SK-N-SH (cell line): ENCODE measurements at regions of chr9 and their contacts with region 1.

Region 1: GRCh38 chr9:109817846-109818472 is 38.0 kb downstream of the PALM2AKAP2 start:
- DNase-seq: peak; percentile 45
- H3K4me3 ChIP-seq: no peak overlapping the region; a peak in 1 of 4 replicates
- H3K27ac ChIP-seq: peak overlapping the region; percentile 60 to 100; a peak in 3 of 4 replicates
- H3K4me1 ChIP-seq: peaks cover 10 to 27% of the 10 kb centered on the region in 2 experiments
- H3K27me3 ChIP-seq: no peaks in the 10 kb centered on the region
- CTCF ChIP-seq: peak; percentile 85
- EP300 ChIP-seq: peak in 1 of 2 experiments; percentile 71; a peak in 1 of 4 replicates
- RAD21 ChIP-seq: peak; percentile 74

Region 2: GRCh38 chr9:109455861-109456260 is 362.1 kb before region 1 on chr9:
- CTCF ChIA-PET with region 1: no interaction called
- POLR2A ChIA-PET with region 1: no interaction called
- DNase-seq: no peak
- H3K4me3 ChIP-seq: no peak overlapping the region
- H3K27ac ChIP-seq: no peak overlapping the region
- H3K4me1 ChIP-seq: peaks cover 3 to 16% of the 10 kb centered on the region in 2 experiments; a peak in 2 of 4 replicates
- H3K27me3 ChIP-seq: no peaks in the 10 kb centered on the region
- CTCF ChIP-seq: no peak
- EP300 ChIP-seq: no peak
- RAD21 ChIP-seq: no peak

Region 3: GRCh38 chr9:109574068-109574882 is 243.7 kb before region 1 on chr9:
- CTCF ChIA-PET with region 1: interaction called, 21 read pairs
- POLR2A ChIA-PET with region 1: no interaction called
- DNase-seq: peak; percentile 42
- H3K4me3 ChIP-seq: no peak overlapping the region
- H3K27ac ChIP-seq: no peak overlapping the region
- H3K4me1 ChIP-seq: no peaks in the 10 kb centered on the region
- H3K27me3 ChIP-seq: no peaks in the 10 kb centered on the region
- CTCF ChIP-seq: peak; percentile 84
- EP300 ChIP-seq: no peak
- RAD21 ChIP-seq: peak; percentile 83

Region 4: DNA sequence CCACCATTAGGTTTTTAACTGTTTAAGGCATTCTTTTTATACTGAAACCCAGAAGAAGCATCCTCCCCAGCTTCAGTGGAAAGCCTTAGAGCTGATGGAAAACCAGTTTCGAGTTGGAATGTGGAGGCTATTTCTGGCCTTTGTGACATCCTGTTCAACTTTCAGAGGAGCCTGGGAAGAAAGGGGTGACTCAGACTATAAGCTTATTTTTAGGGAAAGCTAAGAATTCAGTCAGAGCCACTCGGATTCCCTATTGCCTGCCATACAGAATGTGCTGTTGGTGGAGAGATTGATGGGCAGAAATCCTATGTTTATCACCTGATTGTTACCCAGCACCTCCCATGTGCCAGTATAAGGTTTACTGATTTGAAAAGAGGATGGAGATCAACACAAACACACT is 18.2 kb before region 1 on chr9:
- CTCF ChIA-PET with region 1: interaction called, 25 read pairs
- POLR2A ChIA-PET with region 1: no interaction called
- DNase-seq: no peak
- H3K4me3 ChIP-seq: peak overlapping the region in 1 of 2 experiments; percentile 32; a peak in 1 of 4 replicates
- H3K27ac ChIP-seq: peak overlapping the region; percentile 54 to 99; a peak in 3 of 4 replicates
- H3K4me1 ChIP-seq: peaks cover 0 to 21% of the 10 kb centered on the region in 2 experiments; a peak in 3 of 4 replicates
- H3K27me3 ChIP-seq: no peaks in the 10 kb centered on the region
- CTCF ChIP-seq: no peak
- EP300 ChIP-seq: peak in 1 of 2 experiments; percentile 35; a peak in 1 of 4 replicates
- RAD21 ChIP-seq: no peak

Region 5: DNA sequence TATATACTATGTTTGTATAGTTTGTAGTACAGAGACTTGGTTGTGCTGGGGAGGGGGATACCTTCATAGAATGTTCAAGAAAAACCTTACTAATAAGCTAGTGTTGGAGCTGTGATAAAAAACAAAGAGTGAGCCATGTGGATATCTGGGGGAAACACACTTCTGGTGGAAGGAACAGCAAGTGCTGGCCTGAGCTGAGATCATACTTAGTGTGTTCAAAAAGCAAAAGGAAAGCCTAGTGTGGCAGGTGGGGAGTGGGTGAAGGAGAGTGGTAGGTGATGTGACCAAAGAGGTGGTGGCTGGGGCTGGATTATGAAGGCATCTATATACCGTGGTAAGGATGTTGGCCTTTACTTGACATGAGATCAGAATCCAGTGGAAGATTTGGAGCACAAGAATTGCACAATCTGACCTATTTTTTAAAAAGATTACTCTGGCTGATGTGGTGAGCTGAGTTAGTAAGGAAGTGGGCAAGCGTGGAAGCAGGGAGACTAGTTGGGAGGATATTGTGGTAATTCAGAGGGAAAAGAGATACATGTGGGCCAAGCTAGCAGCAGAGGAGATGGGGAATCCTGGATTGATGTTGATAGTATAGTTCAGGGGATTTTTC is 11.3 kb before region 1 on chr9:
- CTCF ChIA-PET with region 1: interaction called, 25 read pairs
- POLR2A ChIA-PET with region 1: no interaction called
- DNase-seq: no peak
- H3K4me3 ChIP-seq: no peak overlapping the region
- H3K27ac ChIP-seq: peak overlapping the region in 1 of 2 experiments; percentile 8; a peak in 1 of 4 replicates
- H3K4me1 ChIP-seq: peaks cover 0 to 8% of the 10 kb centered on the region in 2 experiments; a peak in 2 of 4 replicates
- H3K27me3 ChIP-seq: no peaks in the 10 kb centered on the region
- CTCF ChIP-seq: no peak
- EP300 ChIP-seq: no peak
- RAD21 ChIP-seq: no peak

Region 6: GRCh38 chr9:110143950-110144545 is 326.1 kb after region 1 on chr9:
- CTCF ChIA-PET with region 1: no interaction called
- POLR2A ChIA-PET with region 1: no interaction called
- DNase-seq: no peak
- H3K4me3 ChIP-seq: no peak overlapping the region
- H3K27ac ChIP-seq: peak overlapping the region in 1 of 2 experiments; percentile 18; a peak in 1 of 4 replicates
- H3K4me1 ChIP-seq: peaks cover 4 to 35% of the 10 kb centered on the region in 2 experiments; a peak in 3 of 4 replicates
- H3K27me3 ChIP-seq: no peaks in the 10 kb centered on the region
- CTCF ChIP-seq: no peak
- EP300 ChIP-seq: no peak
- RAD21 ChIP-seq: no peak